ENCODE measurements at regions of chr1 and their contacts with region 1.

Region 1: DNA sequence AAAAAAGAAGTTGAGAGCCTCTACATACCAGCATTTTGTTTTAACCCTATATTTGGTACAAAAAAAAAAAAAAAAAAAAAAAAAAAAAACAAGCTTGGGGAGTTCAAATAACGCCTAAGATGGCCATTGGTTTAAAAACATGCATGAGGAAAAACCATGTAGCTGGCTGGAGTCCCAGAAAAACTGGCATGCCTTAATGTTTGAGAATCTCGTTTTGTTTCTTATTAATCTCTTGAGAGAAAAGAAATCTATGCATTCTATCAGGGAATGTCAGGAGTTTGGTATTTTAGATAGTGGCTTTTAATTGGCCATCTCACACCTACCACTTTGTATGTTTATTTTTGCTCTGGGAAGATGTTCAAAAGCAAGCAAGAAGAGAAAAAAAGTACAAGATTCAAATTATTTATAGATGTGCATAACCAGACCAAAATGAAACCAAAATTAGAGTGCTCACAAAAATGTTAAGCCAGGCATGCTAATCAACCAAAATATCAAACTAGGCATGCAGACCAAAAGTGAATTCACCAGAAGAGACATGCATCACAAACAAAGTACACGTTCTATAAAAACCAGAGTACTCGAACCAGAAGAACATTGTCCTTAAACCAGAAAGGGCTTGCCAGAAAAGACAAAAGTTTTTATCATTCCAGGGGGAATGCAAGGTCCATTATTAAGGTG is 156.6 kb downstream of the AK5 start:
- DNase-seq: no peak
- ATAC-seq: no peak
- H3K4me3 ChIP-seq: no peak overlapping the region
- H3K27ac ChIP-seq: no peak overlapping the region
- H3K4me1 ChIP-seq: no peaks in the 10 kb centered on the region
- H3K27me3 ChIP-seq: no peaks in the 10 kb centered on the region
- CTCF ChIP-seq: no peak

Region 2: GRCh38 chr1:77292551-77292950 is 145.8 kb before region 1 on chr1:
- CTCF ChIA-PET with region 1: no interaction called
- POLR2A ChIA-PET with region 1: no interaction called
- in situ Hi-C with region 1: no loop called
- intact Hi-C with region 1: no loop called
- DNase-seq: no peak
- ATAC-seq: no peak
- H3K4me3 ChIP-seq: no peak overlapping the region
- H3K27ac ChIP-seq: no peak overlapping the region
- H3K4me1 ChIP-seq: no peaks in the 10 kb centered on the region
- H3K27me3 ChIP-seq: no peaks in the 10 kb centered on the region; the same call in 1 of the 2 replicates
- CTCF ChIP-seq: no peak

Region 3: DNA sequence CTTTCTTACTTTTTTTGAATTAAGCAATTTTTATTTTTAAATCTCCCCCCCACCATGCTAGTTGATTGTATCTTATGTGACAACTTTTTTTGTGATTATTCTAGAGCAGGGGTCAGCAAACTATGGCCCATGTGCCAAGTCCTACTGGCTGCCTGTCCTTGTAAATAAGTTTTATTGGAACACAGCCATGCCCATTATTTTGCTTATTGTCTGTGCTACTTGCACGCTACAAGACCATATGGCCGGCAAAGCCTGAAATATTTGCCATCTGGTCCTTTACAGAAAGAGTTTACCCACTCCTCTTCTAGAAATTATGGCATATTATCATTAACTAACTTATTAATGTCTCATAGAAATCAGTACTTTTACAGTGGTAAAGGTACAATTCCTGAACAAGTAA is 104.9 kb before region 1 on chr1:
- CTCF ChIA-PET with region 1: no interaction called
- POLR2A ChIA-PET with region 1: interaction called, 10 read pairs
- in situ Hi-C with region 1: no loop called
- intact Hi-C with region 1: no loop called
- DNase-seq: no peak
- ATAC-seq: no peak
- H3K4me3 ChIP-seq: no peak overlapping the region
- H3K27ac ChIP-seq: no peak overlapping the region
- H3K4me1 ChIP-seq: no peaks in the 10 kb centered on the region
- H3K27me3 ChIP-seq: no peaks in the 10 kb centered on the region
- CTCF ChIP-seq: no peak

Region 4: GRCh38 chr1:77832901-77833300 is 394.5 kb after region 1 on chr1:
- CTCF ChIA-PET with region 1: no interaction called
- POLR2A ChIA-PET with region 1: no interaction called
- in situ Hi-C with region 1: no loop called
- intact Hi-C with region 1: no loop called
- DNase-seq: no peak
- ATAC-seq: no peak
- H3K4me3 ChIP-seq: no peak overlapping the region
- H3K27ac ChIP-seq: no peak overlapping the region
- H3K4me1 ChIP-seq: no peaks in the 10 kb centered on the region
- H3K27me3 ChIP-seq: no peaks in the 10 kb centered on the region
- CTCF ChIP-seq: no peak